ENCODE measurements at regions of chr11 and their contacts with region 1.

Region 1: GRCh38 chr11:40178470-40178869 is 1281.0 kb downstream of the LRRC4C start:
- DNase-seq: no peak
- H3K4me3 ChIP-seq: no peak overlapping the region
- H3K27ac ChIP-seq: no peak overlapping the region
- H3K4me1 ChIP-seq: no peaks in the 10 kb centered on the region
- H3K27me3 ChIP-seq: no peaks in the 10 kb centered on the region; a peak in 1 of 7 replicates
- CTCF ChIP-seq: no peak
- EP300 ChIP-seq: no peak
- POLR2A ChIP-seq: no peak
- RAD21 ChIP-seq: no peak

Region 2: DNA sequence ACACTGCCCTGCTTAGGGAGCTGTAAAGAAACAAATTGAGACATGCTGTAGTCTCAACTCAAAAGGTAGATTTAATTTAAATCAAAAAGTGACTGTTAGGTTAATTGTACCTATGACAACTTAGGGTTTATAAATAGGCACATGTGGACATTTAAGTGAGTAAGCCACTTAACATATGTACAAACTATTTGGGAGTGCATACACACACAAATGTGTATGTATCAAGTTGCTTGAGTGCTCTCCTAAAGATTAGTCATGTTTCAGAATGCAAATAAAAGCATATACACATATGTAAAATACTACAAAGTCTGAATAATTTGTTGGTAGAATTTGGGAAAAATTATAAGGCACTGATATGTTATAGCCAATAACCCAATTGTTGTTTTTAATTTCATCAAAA is 154.7 kb before region 1 on chr11:
- CTCF ChIA-PET with region 1: no interaction called
- POLR2A ChIA-PET with region 1: no interaction called
- DNase-seq: no peak
- H3K4me3 ChIP-seq: no peak overlapping the region
- H3K27ac ChIP-seq: no peak overlapping the region
- H3K4me1 ChIP-seq: no peaks in the 10 kb centered on the region
- H3K27me3 ChIP-seq: no peaks in the 10 kb centered on the region
- CTCF ChIP-seq: no peak
- EP300 ChIP-seq: no peak
- POLR2A ChIP-seq: no peak
- RAD21 ChIP-seq: no peak

Region 3: GRCh38 chr11:40168461-40168860 is 10.0 kb before region 1 on chr11:
- CTCF ChIA-PET with region 1: interaction called, 13 read pairs
- POLR2A ChIA-PET with region 1: no interaction called
- DNase-seq: no peak
- H3K4me3 ChIP-seq: no peak overlapping the region
- H3K27ac ChIP-seq: no peak overlapping the region
- H3K4me1 ChIP-seq: peaks cover 0 to 3% (median 0%) of the 10 kb centered on the region in 4 experiments; a peak in 1 of 7 replicates
- H3K27me3 ChIP-seq: no peaks in the 10 kb centered on the region
- CTCF ChIP-seq: no peak
- EP300 ChIP-seq: no peak
- POLR2A ChIP-seq: no peak
- RAD21 ChIP-seq: no peak

Measured in H1 (cell line).